Testis (tissue), 5 donors: ENCODE measurements at regions of chr20 and their contacts with region 1.

Region 1: GRCh38 chr20:40689943-40690835 is 1.2 kb upstream of the MAFB start:
- DNase-seq: peak; percentile 94
- H3K4me3 ChIP-seq: peak overlapping the region; percentile 63 to 71
- H3K27ac ChIP-seq: peak overlapping the region; percentile 85 to 88
- H3K4me1 ChIP-seq: peaks cover 7% of the 10 kb centered on the region
- H3K27me3 ChIP-seq: no peaks in the 10 kb centered on the region
- CTCF ChIP-seq: peak; percentile 85 to 95 (median 91)
- POLR2A ChIP-seq: no peak

Region 2: GRCh38 chr20:39885975-39886649 is 804.1 kb before region 1 on chr20:
- intact Hi-C with region 1: loop called (anchors 10 kb)
- DNase-seq: peak; percentile 89
- H3K4me3 ChIP-seq: no peak overlapping the region
- H3K27ac ChIP-seq: peak overlapping the region in 1 of 2 donors; percentile 11
- H3K4me1 ChIP-seq: peaks cover 6% of the 10 kb centered on the region
- H3K27me3 ChIP-seq: no peaks in the 10 kb centered on the region
- CTCF ChIP-seq: peak; percentile 25 to 61 (median 46)
- POLR2A ChIP-seq: no peak